ENCODE measurements at regions of chr16 and their contacts with region 1.

Region 1: GRCh38 chr16:67428146-67428731 is 2.7 kb upstream of the HSD11B2 start:
- DNase-seq: peak; percentile 74
- ATAC-seq: peak; percentile 71
- H3K4me3 ChIP-seq: no peak overlapping the region
- H3K4me3 Mint-ChIP-seq: no peak overlapping the region
- H3K27ac ChIP-seq: no peak overlapping the region
- H3K27ac Mint-ChIP-seq: no peak overlapping the region
- H3K4me1 ChIP-seq: peaks cover 20 to 22% of the 10 kb centered on the region in 2 donors
- H3K4me1 Mint-ChIP-seq: peaks cover 18% of the 10 kb centered on the region
- H3K27me3 ChIP-seq: peaks cover 0 to 48% (median 17%) of the 10 kb centered on the region in 4 experiments
- H3K27me3 Mint-ChIP-seq: peaks cover 52% of the 10 kb centered on the region
- CTCF ChIP-seq: peak; percentile 79

Region 2: GRCh38 chr16:67415872-67416793 is 12.1 kb before region 1 on chr16 and contains the start of gene ZDHHC1:
- CTCF ChIA-PET with region 1: interaction called, 20 read pairs
- POLR2A ChIA-PET with region 1: no interaction called
- intact Hi-C with region 1: no loop called
- DNase-seq: peak; percentile 73
- ATAC-seq: peak; percentile 97
- H3K4me3 ChIP-seq: peak within 1 kb of the TSS; percentile 25 to 69 (median 64)
- H3K4me3 Mint-ChIP-seq: peak within 1 kb of the TSS; percentile 89
- H3K27ac ChIP-seq: peak within 1 kb of the TSS in 1 of 2 donors; percentile 70
- H3K27ac Mint-ChIP-seq: no peak within 1 kb of the TSS
- H3K4me1 ChIP-seq: peaks cover 8 to 11% of the 10 kb centered on the region in 2 donors
- H3K4me1 Mint-ChIP-seq: peaks cover 12% of the 10 kb centered on the region
- H3K27me3 ChIP-seq: peaks cover 0 to 13% (median 5%) of the 10 kb centered on the region in 4 experiments
- H3K27me3 Mint-ChIP-seq: peaks cover 15% of the 10 kb centered on the region
- CTCF ChIP-seq: peak; percentile 67
- total RNA-seq, gene ZDHHC1: 2.4 and 2.8 TPM in 2 replicates

Region 3: GRCh38 chr16:67447508-67448076 is 19.4 kb after region 1 on chr16:
- CTCF ChIA-PET with region 1: interaction called, 29 read pairs
- POLR2A ChIA-PET with region 1: no interaction called
- intact Hi-C with region 1: no loop called
- DNase-seq: peak; percentile 55
- ATAC-seq: peak; percentile 59
- H3K4me3 ChIP-seq: no peak overlapping the region
- H3K4me3 Mint-ChIP-seq: no peak overlapping the region
- H3K27ac ChIP-seq: no peak overlapping the region
- H3K27ac Mint-ChIP-seq: no peak overlapping the region
- H3K4me1 ChIP-seq: no peaks in the 10 kb centered on the region
- H3K4me1 Mint-ChIP-seq: no peaks in the 10 kb centered on the region
- H3K27me3 ChIP-seq: no peaks in the 10 kb centered on the region
- H3K27me3 Mint-ChIP-seq: no peaks in the 10 kb centered on the region
- CTCF ChIP-seq: peak; percentile 39

Region 4: DNA sequence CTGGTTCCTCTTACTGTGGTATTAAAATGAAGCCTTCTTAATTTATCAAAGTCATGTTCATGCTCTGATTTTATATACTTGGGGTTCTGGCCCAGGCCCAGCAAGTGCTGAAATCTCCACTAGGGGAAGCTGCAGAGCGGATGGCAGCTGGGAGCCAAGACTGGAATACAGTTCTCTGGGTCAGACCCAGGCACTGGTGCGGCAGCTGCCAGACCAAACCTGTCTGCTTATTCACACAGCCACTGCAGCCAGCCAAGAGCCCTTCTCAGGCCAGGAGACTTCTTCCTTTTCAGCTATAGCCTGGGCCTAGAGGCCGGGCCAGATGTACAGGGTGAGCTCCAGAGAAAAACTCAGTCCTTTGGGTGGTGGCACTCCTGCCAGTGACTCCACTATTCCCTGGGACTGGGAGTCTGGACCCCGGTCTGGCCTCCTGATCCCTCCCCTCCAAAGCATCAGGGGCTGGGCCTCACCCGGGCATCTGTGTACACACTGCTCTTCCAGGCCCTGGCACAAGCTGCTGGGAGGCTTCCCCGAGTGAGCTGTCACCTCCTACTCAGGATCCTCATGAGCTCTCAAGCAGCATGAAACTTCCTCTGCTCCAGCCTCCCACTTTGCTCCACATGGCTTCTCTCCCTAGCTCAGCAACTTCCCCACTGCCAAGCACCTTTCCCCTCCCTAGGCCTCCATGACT is 28.3 kb after region 1 on chr16:
- CTCF ChIA-PET with region 1: interaction called, 81 read pairs
- POLR2A ChIA-PET with region 1: no interaction called
- intact Hi-C with region 1: no loop called
- DNase-seq: no peak
- ATAC-seq: no peak
- H3K4me3 ChIP-seq: no peak overlapping the region
- H3K4me3 Mint-ChIP-seq: no peak overlapping the region
- H3K27ac ChIP-seq: no peak overlapping the region
- H3K27ac Mint-ChIP-seq: no peak overlapping the region
- H3K4me1 ChIP-seq: peaks cover 0 to 10% of the 10 kb centered on the region in 2 donors
- H3K4me1 Mint-ChIP-seq: peaks cover 16% of the 10 kb centered on the region
- H3K27me3 ChIP-seq: no peaks in the 10 kb centered on the region
- H3K27me3 Mint-ChIP-seq: no peaks in the 10 kb centered on the region
- CTCF ChIP-seq: no peak

Region 5: DNA sequence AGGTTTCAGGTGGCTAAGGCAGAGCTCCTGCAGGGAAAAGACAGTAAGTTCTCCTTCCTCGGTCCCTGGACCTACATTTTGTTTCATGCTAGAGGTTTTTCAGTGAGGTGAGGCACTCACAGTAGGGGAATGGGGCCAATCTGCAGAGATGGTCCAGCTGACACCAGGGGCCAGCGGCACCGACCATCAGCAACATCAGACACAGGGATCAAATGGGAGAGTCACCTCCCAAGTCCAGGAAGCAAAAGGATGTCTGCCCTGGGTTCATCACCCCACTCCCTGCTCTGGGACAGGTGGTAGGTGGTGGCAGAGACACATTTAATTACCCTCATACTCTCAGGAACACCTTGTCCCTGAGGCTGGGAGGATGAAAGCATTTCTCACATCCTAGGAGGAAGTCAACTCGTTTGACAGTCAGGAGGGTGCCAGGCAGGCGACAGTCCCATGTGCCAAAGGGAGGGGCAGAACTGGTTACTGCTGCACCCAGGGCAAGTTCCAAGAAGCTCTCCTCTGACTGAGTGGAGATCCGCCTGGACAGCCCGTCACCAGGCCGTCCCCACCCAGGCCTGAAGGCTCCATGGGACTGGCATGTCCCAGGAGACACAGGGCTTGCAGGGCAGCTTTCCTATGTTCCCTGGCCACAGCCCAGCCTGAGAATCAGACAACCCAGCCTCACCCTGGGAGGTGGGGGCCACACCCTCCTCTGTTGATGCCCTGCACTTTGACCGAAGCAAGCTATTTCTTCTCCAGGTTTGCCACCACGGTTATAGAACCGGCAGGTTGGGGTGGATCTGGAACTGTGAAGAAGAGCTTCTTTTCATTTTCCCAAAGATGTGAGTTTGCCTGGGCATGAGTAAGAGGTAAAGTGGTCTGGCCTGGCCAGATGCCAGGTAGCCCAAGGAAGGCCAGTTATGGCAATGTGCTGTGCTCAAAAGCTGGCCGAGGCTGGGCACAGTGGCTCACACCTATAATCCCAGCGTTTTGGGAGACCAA is 33.7 kb after region 1 on chr16:
- CTCF ChIA-PET with region 1: interaction called, 81 read pairs
- POLR2A ChIA-PET with region 1: interaction called, 3 read pairs
- intact Hi-C with region 1: loop called (anchors 1 kb)
- DNase-seq: no peak
- ATAC-seq: no peak
- H3K4me3 ChIP-seq: no peak overlapping the region
- H3K4me3 Mint-ChIP-seq: no peak overlapping the region
- H3K27ac ChIP-seq: no peak overlapping the region
- H3K27ac Mint-ChIP-seq: no peak overlapping the region
- H3K4me1 ChIP-seq: peaks cover 7 to 23% of the 10 kb centered on the region in 2 donors
- H3K4me1 Mint-ChIP-seq: peaks cover 31% of the 10 kb centered on the region
- H3K27me3 ChIP-seq: no peaks in the 10 kb centered on the region
- H3K27me3 Mint-ChIP-seq: no peaks in the 10 kb centered on the region
- CTCF ChIP-seq: no peak

Region 6: GRCh38 chr16:67470359-67470758 is 42.1 kb after region 1 on chr16:
- CTCF ChIA-PET with region 1: interaction called, 81 read pairs
- POLR2A ChIA-PET with region 1: interaction called, 3 read pairs
- intact Hi-C with region 1: loop called (anchors 1 kb)
- DNase-seq: no peak
- ATAC-seq: no peak
- H3K4me3 ChIP-seq: no peak overlapping the region
- H3K4me3 Mint-ChIP-seq: no peak overlapping the region
- H3K27ac ChIP-seq: no peak overlapping the region
- H3K27ac Mint-ChIP-seq: no peak overlapping the region
- H3K4me1 ChIP-seq: peaks cover 15 to 30% of the 10 kb centered on the region in 2 donors
- H3K4me1 Mint-ChIP-seq: peaks cover 57% of the 10 kb centered on the region
- H3K27me3 ChIP-seq: no peaks in the 10 kb centered on the region
- H3K27me3 Mint-ChIP-seq: no peaks in the 10 kb centered on the region
- CTCF ChIP-seq: no peak